ENCODE measurements at regions of chr11 and their contacts with region 1.

Region 1: DNA sequence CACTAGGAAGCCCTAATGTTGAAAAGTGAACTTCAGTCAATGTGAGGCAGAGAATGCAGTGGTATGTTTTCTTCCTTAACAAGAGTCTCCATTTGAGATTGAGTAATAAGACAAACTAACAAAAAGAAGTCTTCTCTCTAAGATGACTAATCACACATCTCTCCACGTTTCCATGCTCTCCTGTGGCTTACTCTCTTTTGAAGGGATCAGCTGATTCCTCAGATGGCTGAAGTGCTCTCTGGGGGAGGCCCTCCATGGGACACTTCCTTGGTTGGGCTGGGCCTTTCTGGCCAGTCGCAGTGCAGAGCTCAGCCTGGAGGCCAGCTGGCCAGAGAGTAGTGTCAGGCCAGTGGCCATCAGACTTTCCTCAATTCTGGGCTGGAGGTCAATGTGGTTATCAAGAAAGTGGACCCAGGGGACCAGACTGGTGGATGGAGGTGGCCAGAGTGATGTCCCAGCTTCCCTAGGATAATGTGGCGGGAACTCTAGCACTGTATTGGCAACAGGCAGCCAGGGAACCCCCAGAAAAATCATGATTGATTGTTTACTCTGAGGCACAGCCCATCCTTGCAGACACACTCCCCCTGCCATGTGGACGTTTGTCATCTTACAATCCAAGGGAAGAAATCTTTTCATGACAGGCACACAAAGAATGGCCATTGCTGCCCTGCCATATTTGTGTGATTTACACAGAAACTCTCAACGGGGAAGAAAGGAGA is 14.5 kb downstream of the CSRP3 start:
- DNase-seq: no peak
- ATAC-seq: no peak
- H3K4me3 ChIP-seq: no peak overlapping the region
- H3K27ac ChIP-seq: no peak overlapping the region
- H3K4me1 ChIP-seq: no peaks in the 10 kb centered on the region
- H3K27me3 ChIP-seq: no peaks in the 10 kb centered on the region
- CTCF ChIP-seq: no peak

Region 2: GRCh38 chr11:19240420-19241259 is 53.4 kb after region 1 on chr11 and contains the start of gene E2F8:
- intact Hi-C with region 1: loop called in 1 of 2 experiments (anchors 10 kb)
- DNase-seq: peak; percentile 91 to 95
- ATAC-seq: peak; percentile 93 to 97 (median 96)
- H3K4me3 ChIP-seq: peak within 1 kb of the TSS; percentile 81
- H3K27ac ChIP-seq: peak within 1 kb of the TSS; percentile 79
- H3K4me1 ChIP-seq: peaks cover 10% of the 10 kb centered on the region
- H3K27me3 ChIP-seq: peaks cover 0 to 27% (median 9%) of the 10 kb centered on the region in 3 donors
- CTCF ChIP-seq: no peak
- total RNA-seq, gene E2F8: 1.4 to 11.6 (median 3.9) TPM

Measured in psoas muscle (tissue), 8 donors.